Activated CD4-positive, alpha-beta T cell treated with anti-CD3 and anti-CD28 coated beads for 36 hours (primary cell): ENCODE measurements at regions of chr18 and their contacts with region 1.

Region 1: DNA sequence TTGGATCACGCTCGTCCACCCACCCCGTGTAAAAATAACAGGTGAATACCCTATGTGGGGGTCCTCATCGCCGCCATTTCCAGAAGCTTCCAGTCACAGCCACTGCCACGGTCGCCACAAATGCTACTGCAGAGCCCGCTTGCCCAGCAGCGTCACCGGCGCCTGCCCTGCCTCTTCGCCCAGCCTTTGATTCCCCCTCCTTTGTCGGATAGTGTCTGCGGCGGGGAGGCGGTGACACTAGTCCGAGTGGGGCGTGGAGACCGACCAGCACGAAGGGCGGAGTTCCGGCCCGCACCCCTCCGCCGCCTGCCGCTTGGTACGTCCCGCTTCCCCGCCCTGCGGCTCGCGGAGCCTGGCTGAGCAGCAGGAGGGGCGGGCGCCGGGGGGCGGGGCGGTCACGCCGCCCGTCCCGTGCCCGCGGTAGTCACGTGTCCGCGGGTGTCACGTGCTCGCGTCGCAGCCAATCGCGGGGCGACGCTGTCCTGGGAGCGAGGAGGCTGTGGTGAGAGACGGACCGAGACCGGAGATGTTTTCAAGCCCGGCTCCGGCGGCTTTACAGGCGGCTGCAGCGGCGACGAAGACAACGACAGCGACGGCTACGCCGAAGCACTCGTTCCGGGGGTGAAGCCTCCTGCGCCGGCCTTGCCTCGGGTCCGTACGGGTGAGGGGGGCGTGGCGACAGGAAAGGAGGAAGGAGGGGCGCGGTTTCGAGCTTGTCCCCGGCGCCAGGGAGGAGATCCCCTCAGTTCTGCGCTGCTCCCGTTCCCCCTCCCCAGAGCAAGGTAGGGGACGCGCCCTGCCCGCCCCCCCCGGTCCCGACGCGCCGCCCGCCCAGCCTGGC is at the start of gene ANKRD12:
- DNase-seq: peak; percentile 98
- ATAC-seq: peak; percentile 75
- H3K4me3 Mint-ChIP-seq: peak within 1 kb of the TSS; percentile 86
- H3K27ac Mint-ChIP-seq: peak within 1 kb of the TSS; percentile 97
- H3K4me1 Mint-ChIP-seq: peaks cover 53% of the 10 kb centered on the region
- H3K27me3 Mint-ChIP-seq: no peaks in the 10 kb centered on the region
- total RNA-seq, gene ANKRD12: 57.5 to 96.0 TPM

Region 2: GRCh38 chr18:8608795-8609658 is 527.5 kb before region 1 on chr18 and contains the start of gene RAB12:
- CTCF ChIA-PET with region 1: no interaction called
- POLR2A ChIA-PET with region 1: no interaction called
- intact Hi-C with region 1: loop called in 1 of 2 experiments (anchors 5 kb)
- DNase-seq: peak; percentile 92
- ATAC-seq: peak; percentile 88
- H3K4me3 Mint-ChIP-seq: peak within 1 kb of the TSS; percentile 90
- H3K27ac Mint-ChIP-seq: peak within 1 kb of the TSS; percentile 91
- H3K4me1 Mint-ChIP-seq: peaks cover 47% of the 10 kb centered on the region
- H3K27me3 Mint-ChIP-seq: no peaks in the 10 kb centered on the region
- total RNA-seq, gene RAB12: 12.4 to 12.8 TPM

Region 3: GRCh38 chr18:9069601-9070000 is 66.9 kb before region 1 on chr18:
- CTCF ChIA-PET with region 1: interaction called, 15 read pairs
- POLR2A ChIA-PET with region 1: interaction called, 6 read pairs
- intact Hi-C with region 1: loop called in 1 of 2 experiments (anchors 1 kb)
- DNase-seq: no peak
- ATAC-seq: no peak
- H3K4me3 Mint-ChIP-seq: no peak overlapping the region
- H3K27ac Mint-ChIP-seq: peak overlapping the region; percentile 40
- H3K4me1 Mint-ChIP-seq: peaks cover 21% of the 10 kb centered on the region
- H3K27me3 Mint-ChIP-seq: no peaks in the 10 kb centered on the region

Region 4: GRCh38 chr18:9102508-9103375 is 33.8 kb before region 1 on chr18 and contains the start of gene NDUFV2:
- CTCF ChIA-PET with region 1: interaction called, 5 read pairs
- POLR2A ChIA-PET with region 1: interaction called, 27 read pairs
- intact Hi-C with region 1: loop called (anchors 1 kb)
- DNase-seq: peak; percentile 99
- ATAC-seq: peak; percentile 88
- H3K4me3 Mint-ChIP-seq: peak within 1 kb of the TSS; percentile 89
- H3K27ac Mint-ChIP-seq: peak within 1 kb of the TSS; percentile 97
- H3K4me1 Mint-ChIP-seq: peaks cover 40% of the 10 kb centered on the region
- H3K27me3 Mint-ChIP-seq: no peaks in the 10 kb centered on the region
- total RNA-seq, gene NDUFV2: 331 to 372 TPM

Region 5: GRCh38 chr18:9334329-9334972 is 197.9 kb after region 1 on chr18 and contains the start of gene TWSG1:
- CTCF ChIA-PET with region 1: no interaction called
- POLR2A ChIA-PET with region 1: no interaction called
- intact Hi-C with region 1: loop called (anchors 1 to 5 kb)
- DNase-seq: peak; percentile 95
- ATAC-seq: peak; percentile 86
- H3K4me3 Mint-ChIP-seq: peak within 1 kb of the TSS; percentile 82
- H3K27ac Mint-ChIP-seq: peak within 1 kb of the TSS; percentile 67
- H3K4me1 Mint-ChIP-seq: peaks cover 22% of the 10 kb centered on the region
- H3K27me3 Mint-ChIP-seq: peaks cover 3% of the 10 kb centered on the region
- total RNA-seq, gene TWSG1: 7.9 to 8.8 TPM

Region 6: GRCh38 chr18:9614401-9615279 is 478.1 kb after region 1 on chr18 and contains the start of gene PPP4R1:
- CTCF ChIA-PET with region 1: no interaction called
- POLR2A ChIA-PET with region 1: no interaction called
- intact Hi-C with region 1: loop called in 1 of 2 experiments (anchors 1 kb)
- DNase-seq: peak; percentile 84
- ATAC-seq: peak; percentile 57
- H3K4me3 Mint-ChIP-seq: peak within 1 kb of the TSS; percentile 93
- H3K27ac Mint-ChIP-seq: peak within 1 kb of the TSS; percentile 79
- H3K4me1 Mint-ChIP-seq: peaks cover 29% of the 10 kb centered on the region
- H3K27me3 Mint-ChIP-seq: no peaks in the 10 kb centered on the region
- total RNA-seq, gene PPP4R1: 32.2 to 33.3 TPM

Region 7: DNA sequence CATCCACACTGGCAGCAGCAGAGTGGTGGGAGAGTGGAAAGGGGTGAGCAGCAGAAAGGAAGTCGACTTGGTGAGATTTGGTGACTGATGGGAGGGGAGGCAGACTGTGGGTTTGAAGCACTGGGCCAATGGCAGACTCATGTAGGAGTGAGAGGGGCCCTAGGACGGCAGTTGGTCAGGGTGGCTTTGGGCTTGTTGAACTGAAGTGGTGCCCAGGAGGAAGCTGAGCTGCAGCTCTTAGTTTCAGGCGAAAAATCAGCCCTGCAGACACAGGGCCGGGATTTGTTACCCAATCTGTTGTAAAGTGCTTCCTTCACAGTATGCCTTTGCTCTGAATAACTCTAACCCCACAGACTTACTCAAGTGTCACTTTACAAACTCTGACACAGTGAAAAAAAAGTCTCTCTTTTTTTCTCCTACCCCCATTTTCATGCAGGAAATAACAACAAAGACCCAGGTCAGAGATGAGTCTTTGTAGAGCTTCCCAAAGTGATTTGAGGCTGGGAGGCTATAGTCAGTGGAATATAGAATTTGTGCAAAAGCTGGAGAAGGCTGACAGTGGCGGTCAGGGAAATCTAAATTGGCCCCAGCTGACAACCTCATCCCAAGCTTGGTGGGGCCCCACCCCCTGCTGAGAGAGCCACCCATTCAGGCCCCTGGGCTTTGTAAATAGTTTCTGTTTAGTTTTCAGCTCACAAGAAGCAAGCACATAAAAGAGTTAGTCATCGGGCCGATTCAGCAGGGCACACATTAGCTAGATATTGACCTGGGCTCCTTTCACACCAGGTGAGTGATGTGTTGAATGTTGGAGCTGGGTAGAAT is 1004.1 kb after region 1 on chr18:
- CTCF ChIA-PET with region 1: no interaction called
- POLR2A ChIA-PET with region 1: no interaction called
- intact Hi-C with region 1: no loop called
- DNase-seq: no peak
- ATAC-seq: no peak
- H3K4me3 Mint-ChIP-seq: no peak overlapping the region
- H3K27ac Mint-ChIP-seq: no peak overlapping the region
- H3K4me1 Mint-ChIP-seq: peaks cover 3% of the 10 kb centered on the region
- H3K27me3 Mint-ChIP-seq: peaks cover 5% of the 10 kb centered on the region